GM10248 (cell line): ENCODE measurements at regions of chr11 and their contacts with region 1.

Region 1: DNA sequence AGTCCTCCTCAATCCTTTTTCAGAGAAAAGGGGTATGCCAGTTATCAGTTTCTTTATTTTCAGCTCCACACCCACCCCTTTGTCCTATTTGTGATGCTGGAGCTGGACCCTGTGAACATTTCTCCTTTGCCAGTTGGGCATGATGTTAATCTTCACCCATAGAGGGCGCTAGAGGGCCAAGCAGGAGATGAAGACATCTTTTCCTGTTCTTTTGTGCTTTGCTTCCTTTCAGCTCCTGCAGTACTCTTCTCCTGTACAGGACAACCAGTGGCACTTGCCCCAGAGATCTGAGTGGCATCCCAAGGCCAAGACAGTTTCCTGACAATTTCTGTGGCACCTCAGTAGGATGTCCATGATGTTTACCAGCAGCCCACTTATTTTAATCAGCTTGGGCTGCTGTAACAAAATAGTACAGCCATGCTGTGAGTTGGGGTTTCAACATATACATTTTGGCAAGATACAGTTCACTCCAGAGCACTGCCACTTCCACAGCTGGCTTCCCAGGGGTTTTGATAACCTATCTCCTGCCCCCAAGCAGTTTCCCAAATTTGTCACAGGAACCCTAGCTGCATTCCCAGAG is 4.6 kb downstream of the SAA2 start:
- DNase-seq: peak; percentile 54
- CTCF ChIP-seq: peak; percentile 91

Region 2: GRCh38 chr11:18265949-18266348 is 22.1 kb after region 1 on chr11 and contains the start of gene SAA1:
- CTCF ChIA-PET with region 1: interaction called, 17 read pairs
- POLR2A ChIA-PET with region 1: no interaction called
- DNase-seq: no peak
- CTCF ChIP-seq: no peak

Region 3: GRCh38 chr11:18312663-18313420 is 69.0 kb after region 1 on chr11:
- CTCF ChIA-PET with region 1: interaction called, 10 read pairs
- POLR2A ChIA-PET with region 1: no interaction called
- DNase-seq: no peak
- CTCF ChIP-seq: no peak

Region 4: DNA sequence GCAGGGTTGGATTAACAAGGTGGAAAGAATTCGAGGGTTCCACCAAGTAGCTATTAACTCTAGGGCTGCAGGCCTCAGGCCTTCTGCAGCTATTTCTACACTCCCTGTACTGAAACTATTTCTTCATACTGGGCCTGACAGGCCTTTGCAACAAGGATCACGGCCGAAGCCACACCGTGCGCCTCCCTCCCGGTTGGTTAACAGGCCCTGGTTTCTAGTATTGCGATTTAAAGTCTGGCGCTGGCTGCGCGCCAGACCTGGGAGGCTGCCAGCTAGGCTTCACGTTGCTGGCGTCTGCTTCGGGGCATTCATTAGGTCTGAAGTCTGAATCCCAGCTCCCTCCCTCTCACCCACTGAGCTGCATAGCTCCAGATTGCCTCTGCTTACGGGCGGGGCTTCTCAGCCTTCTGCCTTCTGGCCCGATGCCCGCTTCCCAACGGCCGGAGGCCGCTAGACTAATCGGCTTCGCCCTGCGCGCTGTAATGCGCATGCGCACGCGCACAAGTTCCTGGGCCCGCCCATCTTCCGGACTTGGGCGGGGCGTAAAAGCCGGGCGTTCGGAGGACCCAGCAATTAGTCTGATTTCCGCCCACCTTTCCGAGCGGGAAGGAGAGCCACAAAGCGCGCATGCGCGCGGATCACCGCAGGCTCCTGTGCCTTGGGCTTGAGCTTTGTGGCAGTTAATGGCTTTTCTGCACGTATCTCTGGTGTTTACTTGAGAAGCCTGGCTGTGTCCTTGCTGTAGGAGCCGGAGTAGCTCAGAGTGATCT is 152.0 kb after region 1 on chr11:
- CTCF ChIA-PET with region 1: interaction called, 14 read pairs
- POLR2A ChIA-PET with region 1: interaction called, 3 read pairs
- DNase-seq: peak; percentile 96
- CTCF ChIP-seq: no peak

Region 5: GRCh38 chr11:18768472-18768901 is 524.6 kb after region 1 on chr11:
- CTCF ChIA-PET with region 1: interaction called, 13 read pairs
- POLR2A ChIA-PET with region 1: no interaction called
- DNase-seq: peak; percentile 69
- CTCF ChIP-seq: no peak